ENCODE measurements at regions of chr21 and their contacts with region 1.

Region 1: GRCh38 chr21:39349211-39350093 is 564 bp upstream of the HMGN1 start:
- DNase-seq: peak; percentile 98
- H3K4me3 Mint-ChIP-seq: peak overlapping the region; percentile 98
- H3K27ac Mint-ChIP-seq: peak overlapping the region; percentile 100
- H3K4me1 Mint-ChIP-seq: peaks cover 31% of the 10 kb centered on the region
- H3K27me3 Mint-ChIP-seq: peaks cover 2% of the 10 kb centered on the region

Region 2: GRCh38 chr21:39183237-39184007 is 166.0 kb before region 1 on chr21 and contains the start of gene PSMG1:
- CTCF ChIA-PET with region 1: interaction called, 3 read pairs
- POLR2A ChIA-PET with region 1: interaction called, 11 read pairs
- intact Hi-C with region 1: loop called (anchors 1 kb)
- DNase-seq: peak; percentile 95
- H3K4me3 Mint-ChIP-seq: peak within 1 kb of the TSS; percentile 98
- H3K27ac Mint-ChIP-seq: peak within 1 kb of the TSS; percentile 94
- H3K4me1 Mint-ChIP-seq: peaks cover 63% of the 10 kb centered on the region
- H3K27me3 Mint-ChIP-seq: no peaks in the 10 kb centered on the region
- total RNA-seq, gene PSMG1: 82.3 to 85.9 TPM

Region 3: DNA sequence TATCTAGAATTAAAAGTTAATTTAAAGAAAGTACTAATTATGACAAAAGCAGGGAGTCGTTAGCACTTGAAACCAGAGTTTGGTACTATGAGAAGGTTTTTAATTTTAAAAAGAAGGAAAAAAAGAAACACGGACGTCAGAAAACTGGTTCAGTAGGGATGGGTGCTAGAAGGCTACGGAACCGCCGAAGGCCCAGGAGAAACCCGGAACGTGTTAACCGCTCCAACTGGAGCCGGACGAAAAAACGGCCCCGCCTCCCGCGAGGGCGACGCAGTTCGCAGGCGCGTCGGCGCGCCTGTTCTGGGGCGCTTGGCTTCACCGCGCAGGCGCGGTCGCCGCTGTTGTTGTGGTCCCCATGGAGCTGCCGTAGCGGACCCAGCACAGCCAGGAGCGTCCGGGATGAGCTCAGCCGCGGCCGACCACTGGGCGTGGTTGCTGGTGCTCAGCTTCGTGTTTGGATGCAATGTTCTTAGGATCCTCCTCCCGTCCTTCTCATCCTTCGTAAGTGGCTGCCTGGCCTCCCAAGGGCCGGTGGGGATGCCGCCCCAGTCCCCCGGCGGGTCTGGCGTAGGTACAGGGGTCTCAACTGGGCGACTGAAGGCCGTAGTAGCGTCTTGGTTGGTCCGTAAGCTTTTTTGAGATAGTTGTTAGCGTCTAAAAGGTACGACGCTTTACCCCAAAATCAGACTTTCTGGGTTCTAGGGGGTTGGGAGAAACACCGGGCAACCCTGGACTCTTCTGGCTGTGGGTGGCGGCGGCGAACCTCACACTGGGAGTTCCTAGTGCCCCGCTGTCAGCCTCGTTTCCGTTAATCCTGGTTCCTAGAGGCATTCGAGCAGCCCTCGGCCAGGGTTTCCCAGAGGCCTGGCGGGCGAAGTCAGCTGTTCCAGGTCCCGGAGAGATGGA is 30.8 kb after region 1 on chr21:
- CTCF ChIA-PET with region 1: interaction called, 5 read pairs
- POLR2A ChIA-PET with region 1: interaction called, 23 read pairs
- intact Hi-C with region 1: loop called (anchors 1 kb)
- DNase-seq: peak; percentile 96
- H3K4me3 Mint-ChIP-seq: peak overlapping the region; percentile 91
- H3K27ac Mint-ChIP-seq: peak overlapping the region; percentile 80
- H3K4me1 Mint-ChIP-seq: peaks cover 24% of the 10 kb centered on the region
- H3K27me3 Mint-ChIP-seq: peaks cover 2% of the 10 kb centered on the region

Region 4: DNA sequence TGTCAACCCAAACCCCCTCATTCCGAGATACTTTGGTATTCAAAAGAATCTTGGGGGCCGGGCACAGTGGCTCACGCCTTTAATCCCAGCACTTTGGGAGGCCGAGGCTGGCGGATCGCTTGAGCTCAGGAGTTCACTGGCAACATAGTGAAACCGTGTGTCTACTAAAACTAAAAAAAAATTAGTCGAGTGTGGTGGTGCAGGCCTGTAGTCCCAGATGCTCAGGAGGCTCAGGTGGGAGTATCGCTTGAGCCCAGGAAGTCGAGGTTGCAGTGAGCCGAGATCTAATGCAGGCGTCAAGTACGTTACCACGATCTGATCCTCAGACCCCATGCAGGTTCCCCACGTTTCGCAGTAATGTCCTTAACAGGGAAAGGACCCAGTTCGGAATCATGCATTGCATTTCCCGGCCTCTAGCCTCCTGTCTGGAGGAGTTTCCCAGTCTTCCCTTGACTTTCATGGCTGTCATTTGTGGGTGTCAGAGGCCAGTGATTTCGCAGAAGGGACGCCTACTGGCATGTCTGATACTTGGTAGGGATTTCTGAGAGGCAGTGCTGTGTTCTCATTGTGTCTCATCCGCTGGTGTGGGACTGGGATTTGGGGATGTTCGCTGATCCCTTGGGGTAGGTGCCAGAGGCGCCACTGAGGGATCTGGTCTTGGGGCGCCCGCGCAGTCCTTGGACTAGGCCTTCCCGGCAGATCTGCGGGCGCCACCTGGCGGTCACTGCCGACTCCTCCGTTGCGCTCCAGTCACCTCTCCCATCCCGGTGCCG is 38.8 kb after region 1 on chr21:
- CTCF ChIA-PET with region 1: interaction called, 14 read pairs
- POLR2A ChIA-PET with region 1: interaction called, 27 read pairs
- intact Hi-C with region 1: loop called (anchors 1 kb)
- DNase-seq: peak; percentile 92
- H3K4me3 Mint-ChIP-seq: peak overlapping the region; percentile 80
- H3K27ac Mint-ChIP-seq: peak overlapping the region; percentile 87
- H3K4me1 Mint-ChIP-seq: peaks cover 32% of the 10 kb centered on the region
- H3K27me3 Mint-ChIP-seq: no peaks in the 10 kb centered on the region

Measured in activated CD4-positive, alpha-beta memory T cell treated with anti-CD3 and anti-CD28 coated beads for 36 hours (primary cell).